Cardiac septum (tissue), 1 donor: ENCODE measurements at regions of chr7 and their contacts with region 1.

Region 1: GRCh38 chr7:41630741-41631140 is 72.1 kb downstream of the INHBA start:
- DNase-seq: no peak

Region 2: GRCh38 chr7:41045556-41046123 is 585.1 kb before region 1 on chr7:
- intact Hi-C with region 1: loop called (anchors 5 kb)
- DNase-seq: no peak

Region 3: GRCh38 chr7:41573018-41573417 is 57.7 kb before region 1 on chr7:
- intact Hi-C with region 1: loop called (anchors 2 kb)
- DNase-seq: no peak